Psoas muscle (tissue), 8 donors: ENCODE measurements at regions of chr9 and their contacts with region 1.

Region 1: DNA sequence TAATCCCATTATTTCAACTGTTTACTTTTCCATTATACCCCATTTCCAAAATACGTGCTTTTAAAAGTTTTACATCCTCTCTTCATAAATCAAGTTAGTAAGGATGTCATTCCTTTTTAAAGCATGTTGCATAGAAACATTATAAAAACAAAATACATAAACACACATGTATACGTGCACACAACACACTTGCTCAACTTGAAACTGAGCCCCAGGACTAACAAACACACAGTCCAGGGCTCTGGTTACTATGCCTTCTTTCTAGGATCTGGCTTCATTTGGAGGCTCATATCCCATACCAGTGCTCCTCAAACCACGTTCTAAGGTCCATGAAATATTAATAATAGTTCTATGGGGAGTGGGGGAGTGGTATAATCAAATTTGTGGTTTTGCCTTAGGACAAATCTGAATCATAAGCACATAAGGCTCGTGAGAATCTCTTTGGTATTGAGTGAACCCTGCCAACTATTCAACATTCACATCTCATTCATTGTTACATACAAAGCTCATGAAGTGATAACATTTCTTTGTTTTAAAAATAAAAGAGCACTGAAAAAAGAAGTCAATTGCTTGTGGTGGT is 55.2 kb downstream of the NFIB start:
- DNase-seq: no peak
- ATAC-seq: no peak
- H3K4me3 ChIP-seq: no peak overlapping the region
- H3K27ac ChIP-seq: peak overlapping the region; percentile 78
- H3K4me1 ChIP-seq: peaks cover 45% of the 10 kb centered on the region
- H3K27me3 ChIP-seq: no peaks in the 10 kb centered on the region
- CTCF ChIP-seq: no peak

Region 2: GRCh38 chr9:14302405-14302804 is 43.7 kb after region 1 on chr9:
- intact Hi-C with region 1: loop called (anchors 5 to 10 kb)
- DNase-seq: no peak
- ATAC-seq: no peak
- H3K4me3 ChIP-seq: peak overlapping the region; percentile 57
- H3K27ac ChIP-seq: peak overlapping the region; percentile 99
- H3K4me1 ChIP-seq: peaks cover 73% of the 10 kb centered on the region
- H3K27me3 ChIP-seq: no peaks in the 10 kb centered on the region
- CTCF ChIP-seq: no peak

Region 3: GRCh38 chr9:14400658-14400995 is 141.9 kb after region 1 on chr9:
- intact Hi-C with region 1: no loop called
- DNase-seq: peak; percentile 56 to 73
- ATAC-seq: peak; percentile 73 to 85 (median 78)
- H3K4me3 ChIP-seq: peak overlapping the region; percentile 45
- H3K27ac ChIP-seq: peak overlapping the region; percentile 54
- H3K4me1 ChIP-seq: peaks cover 20% of the 10 kb centered on the region
- H3K27me3 ChIP-seq: no peaks in the 10 kb centered on the region
- CTCF ChIP-seq: peak; percentile 58